Activated CD4-positive, alpha-beta T cell treated with anti-CD3 and anti-CD28 coated beads, Interleukin-2, amount 10 ng/mL, durations not matched to agents 24 days and 14 days (primary cell): ENCODE measurements at regions of chr5 and their contacts with region 1.

Region 1: GRCh38 chr5:135488727-135489465 is 36.7 kb upstream of the TIFAB start:
- DNase-seq: no peak
- H3K4me3 Mint-ChIP-seq: no peak overlapping the region
- H3K27ac Mint-ChIP-seq: no peak overlapping the region
- H3K4me1 Mint-ChIP-seq: peaks cover 4% of the 10 kb centered on the region
- H3K27me3 Mint-ChIP-seq: peaks cover 80% of the 10 kb centered on the region

Region 2: DNA sequence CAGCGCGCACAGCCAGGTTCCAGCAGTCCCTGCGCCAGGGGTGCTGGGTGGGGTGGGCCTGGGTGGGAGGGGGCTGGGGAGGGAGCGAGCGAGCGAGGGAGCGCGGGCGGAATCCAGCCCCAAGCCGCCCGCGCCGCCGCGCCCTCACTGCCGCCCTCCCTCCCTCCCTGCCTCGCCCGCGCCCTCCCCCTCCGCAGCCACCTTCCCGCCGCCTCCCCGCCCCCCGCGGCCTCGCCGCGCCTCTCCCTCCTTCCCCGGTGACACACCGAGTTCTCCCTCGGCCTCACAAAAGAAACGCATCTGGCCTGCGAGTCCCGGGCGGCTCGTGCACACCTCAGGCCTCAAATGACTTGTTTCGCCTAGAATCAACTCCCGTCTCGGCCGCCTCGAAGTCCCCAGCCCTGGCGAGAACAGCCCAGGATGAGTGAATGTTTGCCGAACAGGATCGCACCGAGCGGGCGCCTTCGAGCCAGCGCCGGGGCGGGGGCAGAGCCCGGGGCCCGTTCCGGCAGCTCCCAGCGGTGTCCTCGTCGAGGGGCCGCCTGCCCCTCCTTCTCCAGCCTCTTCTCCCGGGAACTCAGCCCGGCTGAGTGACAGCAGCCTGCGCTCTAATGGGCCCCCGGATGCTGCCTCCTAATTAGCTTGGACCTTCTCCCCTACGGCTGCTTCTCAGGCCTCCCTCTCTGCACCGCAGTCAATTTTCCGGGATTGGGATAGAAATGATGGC is 454.5 kb before region 1 on chr5:
- intact Hi-C with region 1: loop called (anchors 5 kb)
- DNase-seq: peak; percentile 64
- H3K4me3 Mint-ChIP-seq: peak overlapping the region; percentile 87
- H3K27ac Mint-ChIP-seq: peak overlapping the region; percentile 81
- H3K4me1 Mint-ChIP-seq: peaks cover 26% of the 10 kb centered on the region
- H3K27me3 Mint-ChIP-seq: peaks cover 79% of the 10 kb centered on the region

Region 3: DNA sequence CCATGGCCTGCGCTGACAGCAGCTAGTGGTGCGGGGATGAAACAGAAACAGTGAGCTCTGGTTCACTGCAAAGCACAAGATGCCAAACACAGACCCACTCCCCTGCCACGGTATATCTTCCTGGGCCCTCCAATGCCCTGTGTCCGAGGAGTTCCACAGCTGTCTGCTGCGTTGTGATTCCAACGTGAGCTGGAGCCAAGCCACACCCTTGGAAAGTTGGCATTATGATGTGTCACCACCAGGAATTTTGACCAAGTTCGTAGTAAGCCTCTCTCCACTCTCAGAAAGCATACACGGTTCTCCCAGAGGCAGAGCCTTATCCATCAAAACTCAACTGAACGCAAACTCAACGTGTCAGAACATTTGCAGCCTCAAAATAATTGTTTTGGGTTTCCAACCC is 145.5 kb before region 1 on chr5:
- intact Hi-C with region 1: no loop called
- DNase-seq: no peak
- H3K4me3 Mint-ChIP-seq: no peak overlapping the region
- H3K27ac Mint-ChIP-seq: no peak overlapping the region
- H3K4me1 Mint-ChIP-seq: peaks cover 2% of the 10 kb centered on the region
- H3K27me3 Mint-ChIP-seq: no peaks in the 10 kb centered on the region

Region 4: DNA sequence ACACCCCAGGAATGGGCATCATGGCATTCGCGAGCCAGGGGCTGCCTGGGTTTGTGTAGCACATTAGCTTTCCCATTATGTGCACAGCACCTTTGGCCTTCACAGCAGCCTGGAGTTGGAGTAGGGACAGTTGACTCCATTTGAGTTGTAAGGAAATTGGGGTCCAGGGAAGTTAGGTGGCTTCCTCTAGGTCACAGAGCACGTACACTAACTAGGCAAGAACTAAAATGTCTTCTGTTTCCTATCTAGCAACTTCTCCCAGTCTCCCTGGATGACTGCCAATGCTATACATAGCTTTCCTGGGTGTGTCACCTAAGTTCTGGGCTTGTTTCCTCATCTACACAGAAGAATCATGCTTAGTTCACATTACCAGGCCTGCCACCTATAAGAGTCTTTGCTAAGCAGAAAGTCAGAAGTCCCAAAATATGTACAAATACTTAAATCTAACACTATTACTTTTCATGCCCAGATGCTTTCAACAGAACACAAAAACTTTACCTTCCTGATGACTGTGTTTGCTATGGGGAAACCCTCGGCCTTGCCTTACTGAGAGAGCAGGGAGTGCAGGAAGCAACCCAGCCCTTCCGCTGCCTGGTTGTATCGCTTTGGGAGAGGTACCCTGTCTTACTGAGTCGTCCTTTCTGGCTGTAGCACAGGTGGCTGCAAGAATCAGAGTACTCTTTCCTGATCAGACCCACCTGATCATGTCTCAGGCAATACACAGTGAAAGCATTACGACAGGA is 101.8 kb before region 1 on chr5:
- intact Hi-C with region 1: no loop called
- DNase-seq: no peak
- H3K4me3 Mint-ChIP-seq: no peak overlapping the region
- H3K27ac Mint-ChIP-seq: peak overlapping the region; percentile 59
- H3K4me1 Mint-ChIP-seq: peaks cover 56% of the 10 kb centered on the region
- H3K27me3 Mint-ChIP-seq: no peaks in the 10 kb centered on the region

Region 5: GRCh38 chr5:135410348-135410747 is 78.5 kb before region 1 on chr5:
- intact Hi-C with region 1: no loop called
- DNase-seq: no peak
- H3K4me3 Mint-ChIP-seq: no peak overlapping the region
- H3K27ac Mint-ChIP-seq: no peak overlapping the region
- H3K4me1 Mint-ChIP-seq: no peaks in the 10 kb centered on the region
- H3K27me3 Mint-ChIP-seq: peaks cover 44% of the 10 kb centered on the region

Region 6: GRCh38 chr5:135437796-135438560 is 50.9 kb before region 1 on chr5:
- intact Hi-C with region 1: no loop called
- DNase-seq: no peak
- H3K4me3 Mint-ChIP-seq: no peak overlapping the region
- H3K27ac Mint-ChIP-seq: no peak overlapping the region
- H3K4me1 Mint-ChIP-seq: no peaks in the 10 kb centered on the region
- H3K27me3 Mint-ChIP-seq: peaks cover 18% of the 10 kb centered on the region

Region 7: DNA sequence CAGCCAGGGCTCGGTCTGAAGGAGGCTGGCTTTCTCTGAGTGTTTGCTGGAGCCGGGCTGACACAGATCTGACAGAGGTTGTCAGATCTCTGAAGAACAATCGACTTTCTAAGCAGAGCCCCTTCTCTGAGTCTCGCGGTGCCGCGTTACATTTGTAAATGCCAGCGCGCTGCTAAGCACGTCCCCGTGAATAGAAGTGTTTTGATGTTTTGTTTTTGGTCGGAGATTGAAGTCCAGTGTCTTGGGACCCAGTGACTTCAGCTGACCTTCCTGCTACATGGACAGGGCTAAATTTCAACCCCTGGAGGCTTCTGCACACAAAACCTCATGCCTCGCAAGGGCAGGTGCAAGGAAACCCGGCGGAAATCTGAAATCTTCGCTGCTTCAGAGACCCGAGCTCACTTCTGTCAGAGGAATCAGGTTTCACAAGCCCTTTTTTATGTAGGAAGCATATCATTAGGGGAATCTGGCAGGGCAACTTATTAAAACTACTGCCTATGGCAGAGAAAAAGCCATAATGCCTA is 19.6 kb after region 1 on chr5:
- intact Hi-C with region 1: loop called (anchors 2 kb)
- DNase-seq: no peak
- H3K4me3 Mint-ChIP-seq: no peak overlapping the region
- H3K27ac Mint-ChIP-seq: no peak overlapping the region
- H3K4me1 Mint-ChIP-seq: no peaks in the 10 kb centered on the region
- H3K27me3 Mint-ChIP-seq: peaks cover 48% of the 10 kb centered on the region

Region 8: DNA sequence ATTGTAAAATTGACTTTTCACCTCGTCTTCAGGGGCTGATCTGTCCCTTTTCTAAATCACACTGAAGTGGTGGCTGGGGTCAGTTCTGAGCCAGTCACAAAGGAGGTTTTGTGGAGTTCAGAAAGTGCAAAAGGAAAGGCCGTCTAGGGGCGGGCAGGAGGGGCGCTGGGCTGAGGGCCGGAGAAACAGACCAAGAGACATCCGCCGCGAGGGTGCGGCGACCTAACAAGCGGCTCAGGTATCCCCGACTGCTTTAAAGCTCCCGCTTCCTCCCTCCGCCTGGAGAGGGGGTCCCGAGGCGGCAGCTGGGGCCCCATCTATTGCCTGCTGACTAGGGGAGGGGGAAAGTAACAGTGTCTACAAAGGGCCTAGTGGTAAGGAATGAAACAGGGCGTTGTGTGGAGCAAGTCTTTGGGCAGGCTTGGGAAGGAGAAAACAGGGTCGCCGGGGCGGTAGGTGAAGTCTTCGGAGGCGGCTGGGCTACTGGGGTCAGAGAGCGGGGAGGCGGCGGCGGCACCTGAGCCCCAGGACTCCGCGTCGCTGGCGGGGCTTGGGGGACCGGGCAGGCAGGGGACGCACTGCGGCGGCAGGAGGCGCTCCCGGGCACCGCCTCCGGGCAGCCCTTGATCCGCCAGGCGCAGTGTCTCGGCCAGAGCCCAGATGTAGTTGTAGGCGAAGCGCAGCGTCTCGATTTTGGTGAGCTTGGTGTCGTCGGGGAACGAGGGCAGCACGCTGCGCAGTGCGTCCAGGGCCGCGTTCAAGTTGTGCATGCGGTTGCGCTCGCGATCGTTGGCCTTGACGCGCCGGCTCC is 45.9 kb after region 1 on chr5:
- intact Hi-C with region 1: loop called (anchors 1 kb)
- DNase-seq: no peak
- H3K4me3 Mint-ChIP-seq: peak overlapping the region; percentile 30
- H3K27ac Mint-ChIP-seq: no peak overlapping the region
- H3K4me1 Mint-ChIP-seq: peaks cover 3% of the 10 kb centered on the region
- H3K27me3 Mint-ChIP-seq: peaks cover 78% of the 10 kb centered on the region

Region 9: GRCh38 chr5:135543485-135544304 is 54.8 kb after region 1 on chr5:
- intact Hi-C with region 1: loop called (anchors 2 kb)
- DNase-seq: no peak
- H3K4me3 Mint-ChIP-seq: peak overlapping the region; percentile 87
- H3K27ac Mint-ChIP-seq: no peak overlapping the region
- H3K4me1 Mint-ChIP-seq: peaks cover 9% of the 10 kb centered on the region
- H3K27me3 Mint-ChIP-seq: peaks cover 88% of the 10 kb centered on the region